Psoas muscle (tissue), 8 donors: ENCODE measurements at regions of chr1 and their contacts with region 1.

Region 1: GRCh38 chr1:206583707-206584648 is 28.3 kb downstream of the EIF2D start:
- DNase-seq: peak; percentile 75 to 83
- ATAC-seq: peak; percentile 42 to 68 (median 46)
- H3K4me3 ChIP-seq: no peak overlapping the region
- H3K27ac ChIP-seq: no peak overlapping the region
- H3K4me1 ChIP-seq: peaks cover 16% of the 10 kb centered on the region
- H3K27me3 ChIP-seq: no peaks in the 10 kb centered on the region
- CTCF ChIP-seq: peak; percentile 96

Region 2: DNA sequence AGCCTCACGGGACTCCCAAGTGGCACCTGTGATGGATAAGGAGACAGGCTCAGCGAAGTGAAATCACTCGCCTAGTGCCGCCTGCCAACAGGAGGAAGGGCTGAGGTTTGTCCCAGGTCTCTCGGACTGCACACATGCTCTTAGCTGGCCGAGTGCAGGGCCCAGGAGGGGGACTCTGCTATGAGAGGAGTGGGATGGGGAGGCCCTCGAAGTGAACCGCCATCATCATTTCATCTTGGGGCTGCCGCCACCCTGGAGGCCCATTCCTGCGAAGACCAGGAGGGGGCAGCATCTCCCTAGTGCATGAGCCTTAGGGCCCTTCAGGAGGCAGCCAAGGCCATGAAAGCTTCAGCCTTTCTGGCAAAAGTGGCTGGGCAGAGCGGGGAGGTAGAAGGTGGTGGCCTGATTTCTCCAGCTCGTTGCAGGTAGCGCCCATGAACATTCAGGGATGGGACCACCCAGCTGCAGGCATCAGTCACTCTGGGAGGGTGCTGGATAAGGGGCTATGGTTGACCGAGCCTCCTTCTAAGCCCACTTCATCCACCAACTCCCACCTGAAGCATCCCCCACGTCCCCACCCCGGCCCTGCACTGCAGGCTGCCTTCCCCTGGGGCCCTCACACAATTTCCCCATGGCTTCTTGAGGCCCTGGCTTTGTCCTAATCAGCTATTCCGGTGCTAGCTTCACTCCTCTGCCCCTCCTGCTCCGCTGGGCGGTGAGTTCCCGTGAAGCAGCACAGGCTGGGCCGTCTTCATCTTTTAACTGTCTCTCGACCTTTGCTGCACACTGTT is 93.8 kb before region 1 on chr1:
- intact Hi-C with region 1: loop called (anchors 1 to 5 kb)
- DNase-seq: peak; percentile 70 to 85
- ATAC-seq: peak; percentile 92 to 98 (median 94)
- H3K4me3 ChIP-seq: no peak overlapping the region
- H3K27ac ChIP-seq: no peak overlapping the region
- H3K4me1 ChIP-seq: no peaks in the 10 kb centered on the region
- H3K27me3 ChIP-seq: no peaks in the 10 kb centered on the region
- CTCF ChIP-seq: peak; percentile 95

Region 3: GRCh38 chr1:206544562-206545257 is 39.3 kb before region 1 on chr1:
- intact Hi-C with region 1: loop called (anchors 1 to 2 kb)
- DNase-seq: peak; percentile 72 to 83
- ATAC-seq: peak; percentile 82 to 89 (median 88)
- H3K4me3 ChIP-seq: no peak overlapping the region
- H3K27ac ChIP-seq: no peak overlapping the region
- H3K4me1 ChIP-seq: no peaks in the 10 kb centered on the region
- H3K27me3 ChIP-seq: no peaks in the 10 kb centered on the region
- CTCF ChIP-seq: peak; percentile 80